ENCODE measurements at regions of chr7 and their contacts with region 1.

Region 1: DNA sequence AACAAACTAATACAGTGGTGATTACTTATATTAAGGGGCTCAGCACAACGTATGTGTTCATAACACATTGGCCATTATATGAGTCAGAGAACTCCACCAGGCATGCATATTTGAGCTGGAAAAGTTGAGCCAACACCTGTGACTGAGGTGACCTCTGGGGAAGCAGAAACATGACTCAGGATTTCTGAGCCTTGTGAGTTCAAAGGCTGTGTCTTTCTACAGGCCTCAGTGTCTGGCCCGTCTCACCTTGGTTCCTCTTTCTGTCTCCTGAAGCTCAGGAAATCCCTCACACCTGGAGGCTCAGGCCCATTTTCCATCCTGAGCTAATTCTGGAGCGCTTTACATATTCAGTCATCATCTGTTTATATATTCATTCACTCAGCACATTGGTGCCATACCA is 230.9 kb upstream of the AGK start:
- DNase-seq: no peak
- H3K4me3 ChIP-seq: no peak overlapping the region
- H3K27ac ChIP-seq: no peak overlapping the region
- H3K4me1 ChIP-seq: no peaks in the 10 kb centered on the region
- H3K27me3 ChIP-seq: no peaks in the 10 kb centered on the region
- CTCF ChIP-seq: no peak

Region 2: GRCh38 chr7:139811066-139811465 is 1509.2 kb before region 1 on chr7:
- CTCF ChIA-PET with region 1: no interaction called
- dilution Hi-C with region 1: no loop called
- in situ Hi-C with region 1: no loop called
- intact Hi-C with region 1: no loop called
- DNase-seq: no peak
- H3K4me3 ChIP-seq: no peak overlapping the region
- H3K27ac ChIP-seq: no peak overlapping the region
- H3K4me1 ChIP-seq: no peaks in the 10 kb centered on the region
- H3K27me3 ChIP-seq: no peaks in the 10 kb centered on the region
- CTCF ChIP-seq: no peak

Region 3: DNA sequence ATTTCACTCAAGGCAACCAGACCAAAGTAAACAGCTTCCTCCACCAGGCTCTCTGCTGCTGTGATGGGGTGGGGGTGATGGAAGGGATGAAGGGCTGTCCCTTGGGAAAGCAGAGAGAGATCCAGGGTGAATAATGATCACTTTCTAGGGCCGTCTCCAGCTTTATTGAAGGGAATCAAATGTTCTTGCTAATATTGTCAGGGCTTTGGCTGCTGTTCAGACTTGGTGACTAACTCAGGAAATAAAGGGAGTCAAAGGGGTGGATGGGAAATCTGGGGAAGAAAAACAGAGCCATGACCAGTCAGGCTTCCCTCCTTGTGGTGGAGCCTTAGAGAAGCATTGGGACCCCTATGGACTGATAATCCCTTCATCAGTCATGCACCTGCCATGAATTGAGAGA is 34.7 kb after region 1 on chr7:
- CTCF ChIA-PET with region 1: no interaction called
- dilution Hi-C with region 1: loop called (anchors 5 kb)
- in situ Hi-C with region 1: no loop called
- intact Hi-C with region 1: no loop called
- DNase-seq: no peak
- H3K4me3 ChIP-seq: no peak overlapping the region
- H3K27ac ChIP-seq: no peak overlapping the region
- H3K4me1 ChIP-seq: peaks cover 13% of the 10 kb centered on the region
- H3K27me3 ChIP-seq: no peaks in the 10 kb centered on the region
- CTCF ChIP-seq: no peak

Region 4: DNA sequence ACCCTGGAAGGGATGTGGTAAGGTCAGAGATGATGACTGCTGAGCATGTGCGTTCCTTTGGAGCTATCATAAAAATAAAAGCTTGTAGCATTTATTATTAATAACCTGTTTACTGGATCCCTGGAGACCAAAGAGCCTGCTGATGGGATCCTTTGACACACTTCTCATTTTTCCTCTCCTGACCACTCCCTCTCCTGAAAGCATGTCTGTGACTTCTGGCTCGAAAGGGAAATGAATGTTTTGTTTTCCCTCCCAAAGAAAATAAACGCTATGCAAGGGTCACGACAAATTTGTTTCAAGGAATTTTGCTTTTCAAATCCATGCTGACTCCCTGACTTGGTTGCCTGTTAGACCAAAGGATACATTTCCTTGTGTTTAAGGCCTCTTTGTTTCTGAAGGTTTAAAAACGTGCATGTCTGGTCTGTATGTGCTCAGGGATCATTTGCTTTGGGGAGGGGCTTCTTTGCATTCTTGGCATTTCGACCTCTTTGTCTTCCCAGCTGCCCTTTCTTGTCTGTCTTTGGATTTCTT is 45.9 kb after region 1 on chr7:
- CTCF ChIA-PET with region 1: no interaction called
- dilution Hi-C with region 1: no loop called
- in situ Hi-C with region 1: no loop called
- intact Hi-C with region 1: no loop called
- DNase-seq: no peak
- H3K4me3 ChIP-seq: no peak overlapping the region
- H3K27ac ChIP-seq: no peak overlapping the region
- H3K4me1 ChIP-seq: peaks cover 17% of the 10 kb centered on the region
- H3K27me3 ChIP-seq: no peaks in the 10 kb centered on the region
- CTCF ChIP-seq: no peak

Measured in mammary epithelial cell (primary cell).